Mammary epithelial cell (primary cell): ENCODE measurements at regions of chr4 and their contacts with region 1.

Region 1: DNA sequence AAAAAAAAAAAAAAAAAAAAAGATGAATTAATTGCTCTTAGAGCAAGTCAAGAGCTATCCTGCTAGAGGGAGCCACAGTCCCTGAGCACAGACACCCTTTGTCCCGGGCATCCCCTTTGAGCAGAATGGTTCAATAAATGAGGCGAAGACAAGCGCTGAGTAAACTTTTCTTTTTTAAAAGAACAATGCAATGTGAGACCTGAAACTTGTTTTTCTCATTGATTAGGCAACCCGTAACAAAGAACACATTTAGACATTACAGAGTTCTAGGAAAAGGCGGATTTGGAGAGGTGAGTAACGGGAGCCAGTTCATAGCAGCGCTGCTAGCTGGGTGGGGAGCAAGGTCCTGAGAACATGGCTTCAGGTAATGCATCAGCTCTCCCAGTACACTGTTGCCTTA is 46.1 kb downstream of the GRK4 start:
- DNase-seq: peak; percentile 65
- H3K4me3 ChIP-seq: no peak overlapping the region
- H3K27ac ChIP-seq: peak overlapping the region; percentile 44
- H3K4me1 ChIP-seq: peaks cover 14% of the 10 kb centered on the region
- H3K27me3 ChIP-seq: no peaks in the 10 kb centered on the region
- CTCF ChIP-seq: peak; percentile 11 to 52

Region 2: DNA sequence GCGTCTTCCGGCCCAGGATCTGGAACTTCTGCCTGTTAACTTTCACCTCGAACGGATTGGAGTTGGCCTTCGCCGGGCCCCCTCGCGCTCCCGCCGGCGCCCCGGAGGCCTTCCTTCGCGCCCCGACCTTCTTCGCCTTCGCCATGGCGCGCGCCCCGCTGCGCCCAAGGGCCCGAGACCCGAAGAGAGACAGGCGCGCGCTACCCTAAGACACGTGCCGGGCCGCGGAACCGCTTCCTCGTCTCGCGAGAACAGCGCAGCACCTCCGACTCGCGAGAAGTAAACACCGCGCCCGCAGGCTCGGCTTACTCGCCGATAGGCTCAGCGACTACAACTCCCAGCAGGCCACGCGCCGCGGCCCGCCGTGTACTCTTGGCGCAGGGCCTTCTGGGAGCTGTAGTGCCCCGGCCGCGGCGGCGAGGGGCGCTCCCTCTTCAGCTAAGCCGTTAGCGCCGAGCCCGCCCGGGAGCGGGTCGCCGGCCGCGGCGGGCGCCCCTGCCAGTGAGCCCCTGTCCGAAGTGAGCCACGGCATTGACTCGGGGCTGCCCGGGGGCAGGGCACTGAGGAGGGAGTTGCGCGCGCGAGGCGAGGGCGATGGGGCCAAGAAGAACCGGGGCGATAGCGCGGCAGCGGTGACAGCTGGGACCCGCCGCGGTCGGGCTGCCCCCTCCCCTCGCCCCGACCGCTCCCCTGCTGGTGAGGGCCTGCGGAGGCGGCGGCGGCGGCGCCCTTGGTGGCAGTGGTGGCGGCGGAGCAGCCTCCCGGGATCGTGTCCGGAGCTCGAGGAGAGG is 46.1 kb before region 1 on chr4 and contains the starts of genes GRK4 and NOP14:
- CTCF ChIA-PET with region 1: no interaction called
- dilution Hi-C with region 1: no loop called
- in situ Hi-C with region 1: no loop called
- intact Hi-C with region 1: loop called (anchors 1 kb)
- DNase-seq: peak; percentile 97
- H3K4me3 ChIP-seq: peak within 1 kb of the TSS; percentile 60 to 89 (median 64)
- H3K27ac ChIP-seq: peak within 1 kb of the TSS; percentile 72
- H3K4me1 ChIP-seq: peaks cover 15% of the 10 kb centered on the region
- H3K27me3 ChIP-seq: no peaks in the 10 kb centered on the region
- CTCF ChIP-seq: peak; percentile 5 to 35
- total RNA-seq, gene GRK4: 5.4 to 6.8 TPM
- total RNA-seq, gene NOP14: 22.8 to 40.0 TPM

Region 3: GRCh38 chr4:3369781-3370674 is 360.6 kb after region 1 on chr4:
- CTCF ChIA-PET with region 1: no interaction called
- dilution Hi-C with region 1: no loop called
- in situ Hi-C with region 1: no loop called
- intact Hi-C with region 1: no loop called
- DNase-seq: peak; percentile 53
- H3K4me3 ChIP-seq: no peak overlapping the region
- H3K27ac ChIP-seq: no peak overlapping the region
- H3K4me1 ChIP-seq: peaks cover 18% of the 10 kb centered on the region
- H3K27me3 ChIP-seq: no peaks in the 10 kb centered on the region
- CTCF ChIP-seq: no peak

Region 4: DNA sequence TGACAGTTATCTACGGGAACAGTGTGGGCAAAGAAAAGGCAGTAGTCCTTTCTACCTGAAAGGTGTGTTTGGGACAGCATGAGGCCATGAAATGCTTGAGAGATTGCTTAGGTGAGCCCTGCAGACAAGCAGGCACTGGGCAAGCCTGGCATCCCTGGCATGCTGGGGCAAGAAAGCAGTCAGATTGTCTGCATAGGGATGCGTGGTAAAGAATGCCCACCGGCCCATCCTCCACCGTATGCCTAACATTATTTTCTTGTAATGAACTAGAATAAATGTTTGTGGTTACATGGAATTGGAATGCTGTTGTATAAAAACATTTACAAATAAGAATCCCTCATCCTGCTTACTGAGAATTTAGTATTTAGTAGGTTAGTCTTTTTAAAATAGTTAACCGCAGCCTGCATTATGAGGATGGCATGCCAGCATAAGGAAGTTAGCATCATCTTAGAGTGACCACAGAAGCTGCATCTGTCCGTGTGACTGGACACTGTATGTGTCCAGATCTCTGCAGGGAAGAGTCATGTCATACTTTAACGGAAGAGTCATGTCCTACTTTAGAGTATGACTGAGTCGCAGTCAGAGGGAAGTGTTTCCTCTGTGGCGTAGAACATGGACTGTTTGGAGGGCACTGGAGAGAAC is 1299.5 kb after region 1 on chr4:
- CTCF ChIA-PET with region 1: no interaction called
- dilution Hi-C with region 1: no loop called
- in situ Hi-C with region 1: no loop called
- intact Hi-C with region 1: no loop called
- DNase-seq: peak; percentile 67
- H3K4me3 ChIP-seq: no peak overlapping the region
- H3K27ac ChIP-seq: peak overlapping the region; percentile 69
- H3K4me1 ChIP-seq: peaks cover 18% of the 10 kb centered on the region
- H3K27me3 ChIP-seq: no peaks in the 10 kb centered on the region
- CTCF ChIP-seq: no peak